Right cardiac atrium (tissue), 5 donors: ENCODE measurements at regions of chr1 and their contacts with region 1.

Region 1: DNA sequence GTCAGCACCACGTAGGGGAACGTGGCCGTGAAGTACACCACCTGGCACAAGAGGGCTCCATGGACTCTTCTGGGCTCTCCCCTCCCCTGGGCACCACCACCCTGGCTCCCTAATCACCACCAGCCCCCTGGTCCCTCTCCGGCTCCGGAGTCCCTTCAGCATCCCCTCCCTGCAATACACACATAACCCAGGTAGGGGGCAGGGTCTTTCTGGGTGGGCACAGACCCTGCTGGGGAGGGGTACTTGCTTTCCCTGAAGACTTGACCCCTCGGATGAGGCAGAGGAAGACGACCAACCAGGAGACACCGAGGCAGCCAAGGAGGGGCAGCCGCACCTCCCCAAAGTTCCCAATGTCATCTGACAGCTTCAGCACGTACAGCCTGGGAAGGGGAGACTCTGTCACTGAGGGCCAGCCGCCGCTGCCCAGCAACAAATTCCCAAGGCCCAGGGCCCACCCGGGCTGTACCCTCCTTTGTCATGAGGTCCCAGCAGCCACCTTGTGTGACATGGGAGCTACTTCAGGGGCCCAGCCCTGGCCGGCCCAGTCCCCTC is 11.3 kb downstream of the CCDC24 start:
- DNase-seq: no peak
- ATAC-seq: no peak
- H3K4me3 ChIP-seq: no peak overlapping the region
- H3K27ac ChIP-seq: no peak overlapping the region
- H3K4me1 ChIP-seq: no peaks in the 10 kb centered on the region
- H3K27me3 ChIP-seq: no peaks in the 10 kb centered on the region

Region 2: DNA sequence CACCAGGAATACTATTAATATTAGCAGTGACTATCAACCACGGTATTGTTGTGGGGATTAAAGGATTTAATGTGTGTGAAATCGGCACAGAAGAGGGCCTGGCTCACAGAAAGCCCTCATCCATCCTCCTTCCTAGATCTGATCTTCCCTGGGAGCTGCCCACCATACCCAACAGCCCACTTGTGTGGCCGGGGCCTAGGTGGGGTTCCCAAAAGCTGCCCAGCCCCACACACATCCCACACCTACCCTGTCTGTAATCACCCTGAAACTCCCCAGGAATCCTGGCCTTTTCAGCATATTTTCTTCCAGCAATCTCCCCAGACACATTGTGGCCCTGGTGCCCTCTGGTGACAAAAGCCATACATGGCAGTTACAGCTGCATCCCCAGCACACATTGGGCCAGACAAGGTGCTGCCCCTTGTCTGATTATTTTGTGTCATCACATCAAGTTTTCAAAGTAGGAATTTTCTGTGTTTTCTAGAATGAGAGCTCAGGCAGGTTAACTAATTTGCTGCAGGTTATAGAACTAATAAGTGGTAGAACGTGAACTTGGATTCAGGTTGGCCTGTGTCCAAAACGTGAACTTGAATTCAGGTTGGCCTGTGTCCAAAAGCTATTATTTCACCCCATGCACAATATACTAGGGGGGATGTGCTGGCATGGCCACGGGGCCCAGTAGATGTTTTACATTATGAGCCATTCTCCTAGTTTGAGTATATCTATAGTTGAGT is 33.9 kb after region 1 on chr1:
- intact Hi-C with region 1: loop called in 2 of 4 experiments (anchors 5 kb)
- DNase-seq: peak; percentile 67 to 80 (median 76)
- ATAC-seq: peak; percentile 58 to 72
- H3K4me3 ChIP-seq: no peak overlapping the region
- H3K27ac ChIP-seq: no peak overlapping the region
- H3K4me1 ChIP-seq: peaks cover 9% of the 10 kb centered on the region
- H3K27me3 ChIP-seq: no peaks in the 10 kb centered on the region

Region 3: GRCh38 chr1:44049839-44050238 is 47.2 kb after region 1 on chr1:
- intact Hi-C with region 1: loop called in 1 of 4 experiments (anchors 5 kb)
- DNase-seq: no peak
- ATAC-seq: no peak
- H3K4me3 ChIP-seq: no peak overlapping the region
- H3K27ac ChIP-seq: no peak overlapping the region
- H3K4me1 ChIP-seq: no peaks in the 10 kb centered on the region
- H3K27me3 ChIP-seq: no peaks in the 10 kb centered on the region